ENCODE measurements at regions of chr14 and their contacts with region 1.

Region 1: GRCh38 chr14:87386524-87386923 is 606.5 kb downstream of the GALC start:
- DNase-seq: no peak
- ATAC-seq: no peak
- H3K4me3 ChIP-seq: no peak overlapping the region
- H3K4me3 Mint-ChIP-seq: no peak overlapping the region
- H3K27ac ChIP-seq: no peak overlapping the region
- H3K27ac Mint-ChIP-seq: no peak overlapping the region
- H3K4me1 ChIP-seq: no peaks in the 10 kb centered on the region
- H3K4me1 Mint-ChIP-seq: no peaks in the 10 kb centered on the region
- H3K27me3 ChIP-seq: no peaks in the 10 kb centered on the region
- H3K27me3 Mint-ChIP-seq: no peaks in the 10 kb centered on the region

Region 2: GRCh38 chr14:87102811-87103378 is 283.6 kb before region 1 on chr14:
- CTCF ChIA-PET with region 1: no interaction called
- POLR2A ChIA-PET with region 1: no interaction called
- DNase-seq: no peak
- ATAC-seq: no peak
- H3K4me3 ChIP-seq: no peak overlapping the region
- H3K4me3 Mint-ChIP-seq: no peak overlapping the region
- H3K27ac ChIP-seq: no peak overlapping the region
- H3K27ac Mint-ChIP-seq: no peak overlapping the region
- H3K4me1 ChIP-seq: no peaks in the 10 kb centered on the region
- H3K4me1 Mint-ChIP-seq: no peaks in the 10 kb centered on the region
- H3K27me3 ChIP-seq: no peaks in the 10 kb centered on the region
- H3K27me3 Mint-ChIP-seq: no peaks in the 10 kb centered on the region

Region 3: DNA sequence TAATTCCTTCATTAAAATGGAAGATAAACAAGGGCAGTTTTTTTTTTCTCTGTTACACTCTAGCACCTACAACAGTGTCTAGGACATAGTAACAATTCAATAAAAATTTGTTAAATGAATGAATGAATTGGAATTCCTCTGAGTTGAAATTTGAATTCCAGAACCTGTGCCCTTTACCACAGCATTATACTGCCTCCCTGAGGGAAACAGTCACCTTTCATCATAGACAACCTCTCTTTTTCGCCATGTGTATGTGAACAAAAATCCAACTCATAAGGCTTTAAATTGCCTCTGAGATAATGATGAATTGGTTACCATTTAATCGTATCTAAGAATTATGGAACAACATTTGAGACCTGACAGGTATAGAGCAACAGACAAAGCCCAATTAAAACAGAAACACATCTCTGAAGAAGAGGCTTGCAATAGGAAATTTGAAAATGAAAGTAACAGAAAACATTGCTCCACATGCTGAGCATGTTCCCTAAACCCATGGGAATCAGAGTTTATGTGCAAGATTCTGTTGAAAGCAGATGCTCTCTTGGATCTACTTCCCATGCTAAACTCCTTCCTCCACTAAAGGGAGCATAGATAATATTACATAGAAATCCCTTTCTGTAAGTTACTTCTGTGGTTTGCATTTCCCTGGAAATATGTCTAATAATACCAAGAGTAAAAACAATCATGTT is 51.4 kb before region 1 on chr14:
- CTCF ChIA-PET with region 1: no interaction called
- POLR2A ChIA-PET with region 1: no interaction called
- DNase-seq: no peak
- ATAC-seq: no peak
- H3K4me3 ChIP-seq: no peak overlapping the region
- H3K4me3 Mint-ChIP-seq: no peak overlapping the region
- H3K27ac ChIP-seq: no peak overlapping the region
- H3K27ac Mint-ChIP-seq: no peak overlapping the region
- H3K4me1 ChIP-seq: no peaks in the 10 kb centered on the region
- H3K4me1 Mint-ChIP-seq: no peaks in the 10 kb centered on the region
- H3K27me3 ChIP-seq: no peaks in the 10 kb centered on the region
- H3K27me3 Mint-ChIP-seq: no peaks in the 10 kb centered on the region

Region 4: GRCh38 chr14:87368752-87369151 is 17.8 kb before region 1 on chr14:
- CTCF ChIA-PET with region 1: no interaction called
- POLR2A ChIA-PET with region 1: interaction called in 1 of 2 experiments, 12 read pairs
- DNase-seq: no peak
- ATAC-seq: no peak
- H3K4me3 ChIP-seq: no peak overlapping the region
- H3K4me3 Mint-ChIP-seq: no peak overlapping the region
- H3K27ac ChIP-seq: no peak overlapping the region
- H3K27ac Mint-ChIP-seq: no peak overlapping the region
- H3K4me1 ChIP-seq: no peaks in the 10 kb centered on the region
- H3K4me1 Mint-ChIP-seq: no peaks in the 10 kb centered on the region
- H3K27me3 ChIP-seq: no peaks in the 10 kb centered on the region
- H3K27me3 Mint-ChIP-seq: no peaks in the 10 kb centered on the region

Region 5: GRCh38 chr14:87508333-87508732 is 121.8 kb after region 1 on chr14:
- CTCF ChIA-PET with region 1: no interaction called
- POLR2A ChIA-PET with region 1: no interaction called
- DNase-seq: no peak
- ATAC-seq: no peak
- H3K4me3 ChIP-seq: no peak overlapping the region
- H3K4me3 Mint-ChIP-seq: no peak overlapping the region
- H3K27ac ChIP-seq: no peak overlapping the region
- H3K27ac Mint-ChIP-seq: no peak overlapping the region
- H3K4me1 ChIP-seq: no peaks in the 10 kb centered on the region
- H3K4me1 Mint-ChIP-seq: no peaks in the 10 kb centered on the region
- H3K27me3 ChIP-seq: no peaks in the 10 kb centered on the region
- H3K27me3 Mint-ChIP-seq: no peaks in the 10 kb centered on the region

Measured in T-cell (primary cell).